ENCODE measurements at regions of chr14 and their contacts with region 1.

Region 1: GRCh38 chr14:68268197-68268596 is 448.6 kb downstream of the RAD51B start:
- DNase-seq: peak; percentile 93
- ATAC-seq: peak; percentile 84
- H3K4me3 ChIP-seq: no peak overlapping the region
- H3K27ac ChIP-seq: peak overlapping the region; percentile 84
- H3K4me1 ChIP-seq: peaks cover 73% of the 10 kb centered on the region
- H3K27me3 ChIP-seq: no peaks in the 10 kb centered on the region
- CTCF ChIP-seq: no peak
- EP300 ChIP-seq: peak; percentile 93 to 100; a peak in 3 of 4 replicates
- POLR2A ChIP-seq: no peak
- RAD21 ChIP-seq: peak; percentile 22

Region 2: DNA sequence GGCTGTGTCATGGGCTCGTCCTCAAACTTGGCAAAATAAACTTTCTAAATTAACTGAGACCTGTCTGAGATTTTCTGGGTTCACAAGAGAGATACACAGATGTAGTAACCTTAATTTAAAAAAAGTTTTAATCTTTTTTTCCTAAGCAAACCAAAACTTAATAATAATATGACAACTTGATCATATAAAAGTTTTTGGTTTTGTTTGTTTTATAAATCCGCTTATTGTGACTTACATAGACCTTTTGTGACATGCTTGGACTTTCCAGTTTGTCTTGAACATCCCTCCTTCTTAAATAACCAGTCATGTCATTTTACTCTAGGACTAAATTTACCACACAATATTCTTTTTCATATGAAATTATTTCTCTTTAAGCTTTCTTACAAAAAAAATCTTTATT is 558.0 kb before region 1 on chr14:
- CTCF ChIA-PET with region 1: no interaction called
- POLR2A ChIA-PET with region 1: no interaction called
- RAD21 ChIA-PET with region 1: no interaction called
- SMC1A ChIA-PET with region 1: no interaction called
- in situ Hi-C with region 1: no loop called
- intact Hi-C with region 1: no loop called
- DNase-seq: no peak
- ATAC-seq: no peak
- H3K4me3 ChIP-seq: no peak overlapping the region
- H3K27ac ChIP-seq: no peak overlapping the region
- H3K4me1 ChIP-seq: no peaks in the 10 kb centered on the region
- H3K27me3 ChIP-seq: no peaks in the 10 kb centered on the region
- CTCF ChIP-seq: no peak
- EP300 ChIP-seq: no peak
- POLR2A ChIP-seq: no peak
- RAD21 ChIP-seq: no peak

Region 3: GRCh38 chr14:68146807-68147206 is 121.4 kb before region 1 on chr14:
- CTCF ChIA-PET with region 1: no interaction called
- POLR2A ChIA-PET with region 1: no interaction called
- RAD21 ChIA-PET with region 1: no interaction called
- SMC1A ChIA-PET with region 1: no interaction called
- in situ Hi-C with region 1: no loop called
- intact Hi-C with region 1: no loop called
- DNase-seq: no peak
- ATAC-seq: no peak
- H3K4me3 ChIP-seq: no peak overlapping the region
- H3K27ac ChIP-seq: no peak overlapping the region
- H3K4me1 ChIP-seq: no peaks in the 10 kb centered on the region
- H3K27me3 ChIP-seq: no peaks in the 10 kb centered on the region
- CTCF ChIP-seq: no peak
- EP300 ChIP-seq: no peak
- POLR2A ChIP-seq: no peak
- RAD21 ChIP-seq: no peak

Region 4: GRCh38 chr14:68222154-68222553 is 46.0 kb before region 1 on chr14:
- CTCF ChIA-PET with region 1: no interaction called
- POLR2A ChIA-PET with region 1: no interaction called
- RAD21 ChIA-PET with region 1: no interaction called
- SMC1A ChIA-PET with region 1: no interaction called
- in situ Hi-C with region 1: no loop called
- intact Hi-C with region 1: no loop called
- DNase-seq: no peak
- ATAC-seq: no peak
- H3K4me3 ChIP-seq: no peak overlapping the region
- H3K27ac ChIP-seq: no peak overlapping the region
- H3K4me1 ChIP-seq: no peaks in the 10 kb centered on the region
- H3K27me3 ChIP-seq: no peaks in the 10 kb centered on the region
- CTCF ChIP-seq: no peak
- EP300 ChIP-seq: no peak
- POLR2A ChIP-seq: no peak
- RAD21 ChIP-seq: no peak

Region 5: DNA sequence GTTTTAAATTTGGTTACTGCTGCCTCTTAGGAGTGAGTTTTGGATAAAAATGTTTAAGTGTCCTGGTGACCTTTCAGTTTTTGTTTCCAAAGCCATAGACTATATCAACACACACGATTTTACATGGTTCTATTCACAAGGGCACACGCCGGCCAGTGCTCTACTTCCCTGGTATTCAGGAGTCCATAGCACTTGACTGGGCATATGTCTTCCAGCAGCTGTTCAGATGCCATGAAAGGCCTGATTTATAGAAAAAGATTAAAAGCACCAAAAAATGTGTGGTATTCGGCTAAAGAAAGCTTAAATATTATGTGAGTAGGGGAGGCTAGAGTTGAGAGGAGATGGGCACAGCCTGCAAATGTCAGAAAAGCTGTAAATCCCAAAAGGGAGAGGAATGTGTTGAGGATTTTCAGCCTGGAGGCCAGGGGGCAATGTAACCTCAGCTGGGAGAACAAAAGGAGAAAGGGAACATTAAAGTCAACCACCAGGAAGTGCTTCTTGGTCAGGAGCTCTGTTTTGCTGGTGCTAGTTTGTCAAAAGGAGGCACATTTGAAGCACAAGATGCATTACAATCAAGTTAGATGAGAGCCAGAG is 29.8 kb after region 1 on chr14:
- CTCF ChIA-PET with region 1: interaction called, 5 read pairs
- POLR2A ChIA-PET with region 1: interaction called, 10 read pairs
- RAD21 ChIA-PET with region 1: interaction called, 4 read pairs
- SMC1A ChIA-PET with region 1: interaction called, 4 read pairs
- in situ Hi-C with region 1: no loop called
- intact Hi-C with region 1: no loop called
- DNase-seq: no peak
- ATAC-seq: no peak
- H3K4me3 ChIP-seq: no peak overlapping the region
- H3K27ac ChIP-seq: peak overlapping the region; percentile 20; the same call in 1 of the 2 replicates
- H3K4me1 ChIP-seq: peaks cover 25% of the 10 kb centered on the region
- H3K27me3 ChIP-seq: no peaks in the 10 kb centered on the region
- CTCF ChIP-seq: no peak
- EP300 ChIP-seq: no peak
- POLR2A ChIP-seq: no peak
- RAD21 ChIP-seq: no peak

Region 6: GRCh38 chr14:68741839-68742470 is 473.8 kb after region 1 on chr14:
- CTCF ChIA-PET with region 1: no interaction called
- POLR2A ChIA-PET with region 1: no interaction called
- RAD21 ChIA-PET with region 1: no interaction called
- SMC1A ChIA-PET with region 1: no interaction called
- in situ Hi-C with region 1: no loop called
- intact Hi-C with region 1: loop called (anchors 5 kb)
- DNase-seq: peak; percentile 93
- ATAC-seq: peak; percentile 97
- H3K4me3 ChIP-seq: no peak overlapping the region
- H3K27ac ChIP-seq: no peak overlapping the region
- H3K4me1 ChIP-seq: peaks cover 13% of the 10 kb centered on the region
- H3K27me3 ChIP-seq: no peaks in the 10 kb centered on the region
- CTCF ChIP-seq: no peak
- EP300 ChIP-seq: peak; percentile 81 to 89
- POLR2A ChIP-seq: no peak
- RAD21 ChIP-seq: 0 out of 2 replicates have a peak, but pooled peaks have one; percentile 22

Measured in GM12878 (cell line).